ENCODE measurements at regions of chr20 and their contacts with region 1.

Region 1: GRCh38 chr20:38057351-38057972 is 23.9 kb downstream of the RPRD1B start:
- DNase-seq: peak; percentile 94
- ATAC-seq: peak; percentile 99
- H3K4me3 Mint-ChIP-seq: no peak overlapping the region
- H3K27ac Mint-ChIP-seq: peak overlapping the region; percentile 71
- H3K4me1 Mint-ChIP-seq: no peaks in the 10 kb centered on the region
- H3K27me3 Mint-ChIP-seq: no peaks in the 10 kb centered on the region
- CTCF ChIP-seq: peak; percentile 81

Region 2: GRCh38 chr20:38017959-38018358 is 39.5 kb before region 1 on chr20:
- CTCF ChIA-PET with region 1: no interaction called
- POLR2A ChIA-PET with region 1: no interaction called
- DNase-seq: no peak
- ATAC-seq: no peak
- H3K4me3 Mint-ChIP-seq: no peak overlapping the region
- H3K27ac Mint-ChIP-seq: no peak overlapping the region
- H3K4me1 Mint-ChIP-seq: no peaks in the 10 kb centered on the region
- H3K27me3 Mint-ChIP-seq: no peaks in the 10 kb centered on the region
- CTCF ChIP-seq: no peak

Region 3: DNA sequence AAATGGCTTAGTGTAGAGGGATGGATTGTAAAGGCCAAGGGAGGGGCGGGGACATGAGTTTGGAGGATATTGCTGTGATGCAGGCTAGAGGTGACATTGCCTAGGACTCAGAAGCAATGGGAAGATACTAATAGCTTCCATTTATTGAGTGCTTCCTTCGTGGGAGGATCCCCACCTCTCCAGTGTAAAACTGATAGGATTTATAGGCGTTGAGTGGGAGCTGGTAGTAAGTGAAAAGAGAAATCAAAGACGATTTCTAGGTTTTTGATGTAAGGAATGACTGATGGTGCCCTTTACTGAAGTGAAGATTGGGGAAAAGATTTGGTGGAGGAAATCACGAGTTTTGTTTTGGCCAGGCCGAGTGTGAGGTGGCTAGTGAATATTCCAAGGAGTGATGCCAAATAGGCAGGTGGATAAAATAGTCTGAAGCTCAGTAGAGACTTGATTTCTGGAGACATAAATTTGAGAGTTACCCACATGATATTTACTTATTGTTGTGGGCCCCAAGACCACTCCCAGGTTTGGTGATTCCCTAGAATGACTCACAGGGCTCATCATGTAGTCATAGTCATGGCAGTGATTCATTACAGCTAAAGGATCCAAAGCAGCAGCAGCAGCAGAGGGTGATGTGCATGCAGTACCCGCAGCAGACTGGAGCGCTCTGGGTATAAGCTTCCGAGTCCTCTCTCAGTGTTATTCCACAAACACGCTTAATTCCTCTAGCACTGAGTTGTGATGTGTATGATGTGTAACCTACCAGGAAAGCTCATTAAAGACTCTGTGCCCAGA is 13.8 kb before region 1 on chr20:
- CTCF ChIA-PET with region 1: interaction called, 14 read pairs
- POLR2A ChIA-PET with region 1: no interaction called
- DNase-seq: no peak
- ATAC-seq: no peak
- H3K4me3 Mint-ChIP-seq: no peak overlapping the region
- H3K27ac Mint-ChIP-seq: peak overlapping the region; percentile 17; the same call in 1 of the 2 replicates
- H3K4me1 Mint-ChIP-seq: peaks cover 18% of the 10 kb centered on the region
- H3K27me3 Mint-ChIP-seq: no peaks in the 10 kb centered on the region
- CTCF ChIP-seq: no peak

Region 4: DNA sequence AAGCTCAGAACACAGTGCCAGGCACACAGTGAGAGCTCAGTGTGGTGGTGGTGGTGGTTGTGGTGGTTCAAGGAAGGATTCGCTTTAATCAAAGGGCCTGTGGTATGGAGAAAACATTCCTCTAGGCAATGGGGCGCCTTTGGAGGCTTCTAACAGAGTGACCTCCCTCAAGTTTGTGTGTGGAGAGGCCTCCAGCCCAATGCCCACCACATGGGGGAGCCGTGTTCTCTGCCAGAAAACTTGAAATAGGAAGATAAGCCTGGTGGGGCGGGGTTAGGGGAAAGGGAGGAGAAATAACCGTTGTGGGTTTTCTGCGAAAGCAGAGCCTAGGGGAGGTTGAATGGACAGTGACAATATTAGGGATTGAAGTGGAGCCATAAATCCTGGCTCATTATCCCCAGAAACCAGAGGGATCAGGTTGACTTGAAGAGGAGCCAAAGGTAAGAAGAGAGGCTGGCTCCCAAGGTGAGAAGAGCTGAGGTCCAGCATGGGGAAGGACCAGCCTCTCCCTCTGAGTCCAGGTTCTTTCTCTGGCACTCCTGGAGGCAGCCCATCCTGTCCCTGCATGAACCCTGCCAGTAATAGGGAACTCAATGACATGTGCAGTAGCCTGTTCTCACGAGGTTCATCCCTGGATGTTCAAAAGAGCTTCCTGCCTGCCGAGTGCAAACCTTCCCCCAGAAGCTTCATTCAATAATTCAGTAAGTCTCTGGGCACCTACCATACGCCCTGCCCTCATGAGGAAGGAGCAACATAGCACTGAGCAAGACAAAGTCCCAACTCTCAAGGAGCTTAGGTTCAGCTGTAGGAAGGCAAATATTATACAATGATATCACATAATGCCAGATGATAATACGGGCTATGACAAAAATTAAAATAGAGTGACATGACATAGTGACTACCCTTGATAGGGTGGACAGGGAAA is 56.2 kb after region 1 on chr20:
- CTCF ChIA-PET with region 1: interaction called, 16 read pairs
- POLR2A ChIA-PET with region 1: no interaction called
- DNase-seq: peak; percentile 81
- ATAC-seq: peak; percentile 98
- H3K4me3 Mint-ChIP-seq: no peak overlapping the region
- H3K27ac Mint-ChIP-seq: no peak overlapping the region
- H3K4me1 Mint-ChIP-seq: peaks cover 3% of the 10 kb centered on the region; the same call in 1 of the 2 replicates
- H3K27me3 Mint-ChIP-seq: no peaks in the 10 kb centered on the region
- CTCF ChIP-seq: no peak; the same call in 1 of the 2 replicates

Region 5: DNA sequence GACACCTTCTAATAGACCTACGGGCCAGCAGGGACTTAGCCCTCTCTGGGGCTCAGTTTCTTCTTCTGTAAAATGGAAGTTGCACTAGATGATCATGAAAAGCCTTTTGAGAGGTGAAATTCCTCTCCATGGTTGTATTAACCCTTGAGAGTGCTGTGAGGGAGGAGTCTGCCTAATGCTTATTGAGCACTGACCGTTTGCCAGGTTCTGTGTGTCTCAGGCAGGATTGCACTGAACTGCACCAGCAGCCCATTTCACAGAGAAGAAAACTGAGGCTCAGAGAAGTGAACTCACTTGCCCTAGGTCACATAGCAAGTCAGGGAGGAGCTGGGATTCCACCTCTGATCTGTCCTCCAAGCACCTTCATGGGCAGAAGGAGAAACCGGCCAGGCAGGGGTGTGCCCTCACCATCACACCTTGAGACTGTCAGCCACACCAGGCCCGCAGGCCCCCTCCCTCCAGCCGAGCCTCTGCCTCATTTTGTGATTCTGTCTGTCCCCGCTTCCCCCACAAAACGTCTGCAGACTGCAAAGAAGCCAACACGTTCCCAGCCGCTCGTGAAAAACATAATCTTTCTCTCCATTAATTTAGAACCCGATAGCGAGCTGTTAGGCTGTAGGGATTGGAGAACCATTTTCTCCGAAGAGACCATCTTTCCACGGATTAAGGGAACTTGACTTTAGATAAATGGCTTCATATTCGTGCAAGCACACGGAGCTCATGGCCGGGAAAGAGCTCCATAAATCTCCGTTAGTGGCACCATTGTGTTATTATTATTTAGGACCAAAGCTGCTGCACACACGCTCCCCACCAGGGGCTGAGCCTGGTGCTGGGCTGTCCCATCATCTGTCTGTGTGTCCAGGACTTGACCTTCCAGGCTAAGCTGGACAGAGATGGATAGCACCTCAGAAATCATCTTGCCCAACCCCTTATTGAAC is 157.1 kb after region 1 on chr20:
- CTCF ChIA-PET with region 1: interaction called, 76 read pairs
- POLR2A ChIA-PET with region 1: no interaction called
- DNase-seq: no peak
- ATAC-seq: peak; percentile 41
- H3K4me3 Mint-ChIP-seq: no peak overlapping the region
- H3K27ac Mint-ChIP-seq: no peak overlapping the region
- H3K4me1 Mint-ChIP-seq: peaks cover 2% of the 10 kb centered on the region; the same call in 1 of the 2 replicates
- H3K27me3 Mint-ChIP-seq: no peaks in the 10 kb centered on the region
- CTCF ChIP-seq: no peak

Region 6: GRCh38 chr20:38229376-38230252 is 172.2 kb after region 1 on chr20:
- CTCF ChIA-PET with region 1: interaction called, 15 read pairs
- POLR2A ChIA-PET with region 1: no interaction called
- DNase-seq: no peak
- ATAC-seq: peak; percentile 60
- H3K4me3 Mint-ChIP-seq: no peak overlapping the region
- H3K27ac Mint-ChIP-seq: no peak overlapping the region
- H3K4me1 Mint-ChIP-seq: 0 out of 2 replicates have a peak, but pooled peaks cover 3% of the 10 kb centered on the region
- H3K27me3 Mint-ChIP-seq: no peaks in the 10 kb centered on the region
- CTCF ChIP-seq: peak; percentile 38; the same call in 1 of the 2 replicates

Measured in WTC11 (cell line).